ENCODE measurements at regions of chr6 and their contacts with region 1.

Region 1: DNA sequence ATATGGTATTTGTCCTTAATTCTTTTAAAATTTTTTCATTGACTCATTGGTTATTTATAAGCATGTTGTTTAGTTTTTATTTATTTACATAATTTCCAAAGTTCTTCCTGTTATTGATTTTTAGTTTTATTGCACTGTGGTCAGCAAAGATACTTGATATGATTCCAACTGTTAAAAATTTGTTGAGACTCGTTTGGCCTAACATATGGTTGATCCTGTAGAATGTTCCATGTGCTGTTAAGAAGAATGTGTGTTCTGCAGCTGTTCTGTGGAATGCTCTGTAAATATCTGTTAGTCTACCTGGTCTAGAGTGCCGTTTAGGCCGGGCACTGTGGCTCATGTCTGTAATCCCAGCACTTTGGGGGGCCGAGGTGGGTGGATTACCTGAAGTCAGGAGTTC is 197.7 kb downstream of the CD109 start:
- DNase-seq: no peak
- ATAC-seq: no peak
- H3K4me3 Mint-ChIP-seq: no peak overlapping the region
- H3K27ac Mint-ChIP-seq: no peak overlapping the region
- H3K4me1 Mint-ChIP-seq: no peaks in the 10 kb centered on the region
- H3K27me3 Mint-ChIP-seq: no peaks in the 10 kb centered on the region
- CTCF ChIP-seq: no peak

Region 2: DNA sequence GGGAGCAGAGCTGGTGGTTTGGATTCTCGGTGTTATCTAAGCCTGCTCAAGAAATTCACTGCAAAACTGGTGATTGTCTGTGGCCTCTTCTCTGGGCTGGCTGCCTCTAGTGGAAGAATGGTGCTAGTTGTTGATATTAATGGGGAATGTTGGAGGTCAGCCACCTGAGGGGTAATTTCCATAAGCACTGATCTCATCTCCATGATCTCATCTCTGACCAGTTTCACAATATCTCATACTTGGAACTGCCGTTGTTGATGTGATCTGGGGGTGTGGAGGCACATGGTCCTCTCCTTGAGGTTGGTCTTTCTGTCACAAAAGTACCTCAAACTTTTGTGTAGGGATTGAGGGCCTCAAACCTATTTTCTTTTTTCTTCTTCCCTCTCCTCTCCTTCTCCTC is 95.1 kb before region 1 on chr6:
- CTCF ChIA-PET with region 1: no interaction called
- POLR2A ChIA-PET with region 1: no interaction called
- intact Hi-C with region 1: no loop called
- DNase-seq: no peak
- ATAC-seq: no peak
- H3K4me3 Mint-ChIP-seq: no peak overlapping the region
- H3K27ac Mint-ChIP-seq: no peak overlapping the region
- H3K4me1 Mint-ChIP-seq: no peaks in the 10 kb centered on the region
- H3K27me3 Mint-ChIP-seq: peaks cover 4% of the 10 kb centered on the region
- CTCF ChIP-seq: no peak

Region 3: DNA sequence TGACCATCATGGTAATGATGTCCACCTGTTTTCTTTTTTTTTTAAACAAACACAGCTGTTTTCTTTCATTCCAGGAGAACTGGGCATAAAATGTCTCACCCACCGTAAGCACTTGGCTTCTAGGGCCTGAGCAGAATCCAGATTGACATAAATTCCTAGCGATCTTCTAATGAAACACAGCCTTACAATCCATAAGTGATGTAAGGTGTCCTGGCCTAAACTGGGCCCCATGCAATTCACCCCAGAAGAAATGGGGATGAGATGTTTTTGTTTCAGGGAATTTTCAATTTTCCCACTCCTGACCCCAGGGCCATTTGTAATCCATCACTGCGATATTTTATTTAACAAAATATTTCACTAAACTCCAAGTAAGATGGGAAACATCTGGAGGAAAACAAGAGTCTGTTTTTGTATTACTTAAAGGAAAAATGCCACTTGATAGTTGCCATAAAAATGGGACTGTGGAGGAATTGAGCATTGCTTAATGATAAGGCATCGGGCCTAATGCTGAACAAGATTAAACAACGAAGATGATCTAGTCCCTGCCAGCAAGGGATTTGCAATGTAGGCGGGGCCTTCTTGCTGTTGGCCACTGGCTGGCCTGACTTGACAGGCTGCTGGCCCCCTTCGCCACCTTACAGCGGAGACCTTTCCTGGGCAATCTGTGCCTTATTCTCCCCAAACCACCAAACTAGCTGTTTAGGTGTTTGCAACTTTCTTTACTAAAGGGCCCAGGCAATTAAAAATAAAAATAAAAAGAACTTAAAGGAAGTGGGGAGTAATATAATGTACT is 14.0 kb before region 1 on chr6:
- CTCF ChIA-PET with region 1: no interaction called
- POLR2A ChIA-PET with region 1: no interaction called
- intact Hi-C with region 1: loop called (anchors 1 kb)
- DNase-seq: no peak
- ATAC-seq: no peak
- H3K4me3 Mint-ChIP-seq: no peak overlapping the region
- H3K27ac Mint-ChIP-seq: no peak overlapping the region
- H3K4me1 Mint-ChIP-seq: no peaks in the 10 kb centered on the region
- H3K27me3 Mint-ChIP-seq: no peaks in the 10 kb centered on the region
- CTCF ChIP-seq: no peak

Measured in activated B cell treated with CpG ODN at 0.5 μM for 24 hours (primary cell).